GM13976 (cell line): ENCODE measurements at regions of chr1 and their contacts with region 1.

Region 1: DNA sequence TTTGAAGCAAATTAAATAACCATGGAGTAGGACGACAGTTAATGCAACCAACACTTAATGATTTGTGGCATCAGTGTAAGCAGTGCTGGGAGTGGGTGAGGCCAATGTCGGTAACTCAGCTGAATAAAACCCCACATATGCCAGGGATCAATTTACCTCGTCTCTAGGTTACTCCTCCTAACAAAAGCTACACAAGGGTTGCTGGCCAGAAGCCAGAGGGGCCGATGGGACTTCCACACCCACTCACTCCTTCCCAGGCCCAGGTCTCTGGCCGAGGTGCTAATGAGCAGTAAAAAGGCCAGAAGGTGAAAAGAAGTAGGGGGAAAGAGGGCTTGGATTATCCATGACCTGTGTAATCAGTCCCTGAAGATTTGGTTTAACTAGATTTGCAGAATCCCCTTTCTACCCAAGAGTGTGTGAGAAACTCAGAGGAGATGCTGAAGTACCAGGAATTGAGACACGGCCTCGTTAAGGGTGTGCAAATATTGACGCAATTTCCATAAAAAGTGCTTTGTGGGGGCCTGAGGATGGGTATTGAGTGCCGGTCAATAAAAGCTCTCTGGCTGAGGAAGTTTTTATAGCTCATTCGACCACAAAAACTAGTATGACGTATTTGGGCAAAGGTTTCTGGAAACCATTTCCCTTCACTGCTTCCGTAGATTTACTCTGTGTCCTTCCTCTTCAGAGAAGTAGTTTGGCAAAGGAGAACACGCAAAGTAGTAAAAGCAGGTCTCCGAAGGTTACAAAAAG is 145.5 kb downstream of the TBX15 start:
- DNase-seq: no peak
- CTCF ChIP-seq: no peak

Region 2: DNA sequence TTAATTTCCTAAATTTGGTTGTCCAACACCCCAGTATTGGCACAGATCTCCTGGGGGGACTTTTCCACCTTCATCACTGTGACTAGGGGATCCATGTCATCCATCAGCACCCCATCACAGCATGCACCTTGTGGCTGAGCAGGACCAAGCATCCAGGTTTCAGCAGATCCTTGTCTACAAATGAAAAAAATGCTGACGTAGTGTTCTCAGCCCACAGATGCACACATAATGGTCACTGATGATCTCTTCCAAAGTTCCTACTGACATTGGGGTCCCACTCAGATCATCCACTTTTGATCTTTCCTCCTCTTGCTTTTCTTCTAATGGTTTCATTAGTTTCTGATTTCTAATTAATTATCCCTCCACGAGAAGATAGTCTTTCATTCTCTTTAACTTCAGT is 227.6 kb before region 1 on chr1:
- in situ Hi-C with region 1: no loop called
- DNase-seq: no peak
- CTCF ChIP-seq: no peak

Region 3: DNA sequence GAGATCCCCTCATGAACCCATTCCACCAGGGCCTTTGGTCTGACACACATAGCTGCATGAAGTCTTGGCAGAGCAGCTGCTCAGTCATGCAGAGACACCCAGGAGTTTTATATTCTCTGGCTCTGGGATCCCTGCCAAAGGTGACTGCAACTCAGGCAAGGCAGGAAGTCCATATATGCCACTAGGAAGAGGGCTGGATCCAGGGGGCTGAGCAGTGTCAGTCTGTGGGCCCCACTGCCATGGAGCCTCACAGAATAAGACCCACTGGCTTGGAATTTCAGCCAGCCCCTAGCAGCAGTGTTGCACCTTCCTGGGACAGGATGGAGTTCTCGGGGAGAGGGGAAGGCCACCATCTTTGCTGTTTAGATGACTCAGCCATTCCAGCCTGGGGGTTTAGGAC is 54.2 kb before region 1 on chr1:
- in situ Hi-C with region 1: loop called (anchors 10 kb)
- DNase-seq: no peak
- CTCF ChIP-seq: no peak

Region 4: GRCh38 chr1:118960026-118960561 is 117.5 kb after region 1 on chr1:
- in situ Hi-C with region 1: no loop called
- DNase-seq: no peak
- CTCF ChIP-seq: no peak